GM18951 (cell line): ENCODE measurements at regions of chr22 and their contacts with region 1.

Region 1: DNA sequence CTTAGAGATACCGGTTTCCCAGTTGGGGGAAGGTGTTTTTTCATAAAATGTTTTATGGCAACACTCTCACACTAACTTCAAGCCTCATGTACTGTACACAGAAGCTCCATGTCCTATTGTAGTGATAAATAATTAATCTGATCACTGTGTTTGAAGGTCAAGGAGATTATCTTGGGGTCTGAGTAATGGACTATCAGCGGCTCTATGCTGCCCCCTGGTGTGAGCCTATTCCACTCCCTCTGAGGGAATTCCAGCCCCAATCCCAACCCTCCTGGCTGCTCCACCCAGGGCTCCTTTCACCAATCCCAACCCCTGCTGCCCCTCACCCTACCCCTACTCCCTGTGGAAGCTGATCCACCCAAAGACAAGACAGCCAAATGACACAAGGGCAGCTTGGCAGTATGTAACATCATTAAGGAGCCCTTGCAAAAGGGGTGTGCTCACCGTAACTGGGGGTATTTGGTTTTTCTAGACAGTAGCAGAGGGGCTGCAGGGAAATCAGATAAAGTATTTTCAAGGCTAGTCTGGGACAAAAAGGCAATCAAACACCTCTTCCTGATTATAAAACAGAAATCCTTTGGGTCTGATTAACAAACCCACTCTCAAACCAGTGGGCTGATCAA is 22.3 kb downstream of the HPS4 start:
- POLR2A ChIP-seq: no peak

Region 2: DNA sequence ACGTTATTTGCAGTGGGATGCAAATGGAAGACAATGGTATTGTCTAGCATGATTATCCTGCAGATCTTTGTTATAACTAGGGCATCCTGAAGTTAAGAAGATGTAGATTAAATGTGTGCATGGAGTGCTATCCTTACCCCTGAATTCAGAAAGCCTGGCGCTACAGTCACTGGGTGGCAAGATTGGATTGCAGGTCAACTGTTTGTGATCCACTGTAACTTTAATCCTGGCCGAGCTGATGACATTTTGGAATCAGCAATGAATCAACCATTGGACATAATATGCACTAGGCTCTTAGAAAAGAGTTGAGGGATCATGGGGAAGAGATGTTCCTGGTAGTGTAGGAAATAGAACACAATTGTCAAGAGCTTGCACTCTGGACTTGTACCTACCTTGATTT is 267.0 kb before region 1 on chr22:
- in situ Hi-C with region 1: no loop called
- POLR2A ChIP-seq: no peak

Region 3: DNA sequence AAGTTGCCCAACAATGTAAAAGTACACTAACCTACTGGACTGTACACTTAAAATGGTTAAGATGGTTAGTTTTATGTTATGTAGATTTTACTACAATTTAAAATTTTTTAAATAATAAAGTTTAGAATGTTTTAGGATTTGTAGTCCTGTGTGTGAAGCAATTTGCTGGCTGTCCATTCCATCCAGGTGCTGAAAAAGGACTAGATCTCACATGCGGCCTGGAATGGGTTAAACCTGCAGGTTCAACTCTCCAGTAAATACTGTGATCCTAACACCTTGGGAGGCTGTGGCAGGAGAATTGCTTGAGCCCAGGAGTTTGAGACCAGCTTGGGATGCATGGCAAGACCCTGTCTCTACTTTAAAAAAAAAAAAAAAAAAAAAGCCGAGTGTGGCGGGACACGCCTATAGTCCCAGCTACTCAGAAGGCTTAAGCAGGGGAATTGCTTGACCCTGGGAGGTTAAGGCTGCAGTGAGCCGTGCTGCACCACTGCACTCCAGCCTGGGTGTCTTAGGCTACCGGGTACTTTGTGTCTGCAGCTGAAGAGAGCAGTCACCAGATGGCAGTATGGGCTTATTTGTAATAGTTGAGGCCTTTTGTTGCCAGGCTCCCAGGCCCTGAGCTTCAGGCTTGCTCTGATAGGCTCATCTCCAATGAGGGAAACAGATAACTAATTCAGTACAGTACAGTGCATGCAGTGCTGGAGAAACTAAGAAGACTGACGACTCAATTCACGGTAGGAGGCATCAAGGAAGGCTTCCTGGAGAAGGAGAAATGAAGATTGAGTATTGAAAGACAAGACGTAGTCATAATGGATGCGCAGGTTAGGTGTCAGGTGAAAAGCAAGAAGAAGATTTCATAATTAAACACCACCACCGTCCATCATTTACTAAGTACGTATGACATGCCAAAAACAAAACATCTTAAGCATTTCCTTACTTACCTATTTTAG is 97.0 kb before region 1 on chr22:
- in situ Hi-C with region 1: loop called (anchors 25 kb)
- POLR2A ChIP-seq: no peak

Region 4: DNA sequence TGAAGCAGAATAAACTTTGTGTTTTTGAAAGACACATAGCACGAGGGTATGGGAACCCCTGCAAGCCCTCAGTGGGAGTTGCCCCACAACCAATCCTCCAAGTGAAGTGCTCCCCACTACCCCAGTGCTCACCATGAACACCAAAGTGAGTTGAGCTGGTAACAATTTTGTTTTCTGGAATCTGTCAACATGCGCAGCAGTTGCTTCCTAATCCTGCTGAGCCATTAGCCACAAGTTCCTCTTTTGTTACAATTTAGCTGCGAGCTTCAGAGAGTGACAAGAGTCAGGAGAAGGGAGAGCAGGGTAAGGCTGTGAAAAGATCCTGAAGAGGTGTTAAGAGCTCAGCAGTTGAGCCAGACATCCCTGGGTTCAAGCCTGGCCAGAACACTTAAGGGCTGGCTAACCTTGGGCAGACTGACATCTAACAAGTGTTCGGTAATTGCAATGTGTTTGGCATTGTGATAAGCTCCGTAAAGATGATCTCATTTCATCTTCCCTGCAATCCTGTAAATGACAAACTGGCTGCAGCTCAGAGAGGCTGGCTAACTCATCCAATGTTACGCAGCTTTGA is 56.4 kb before region 1 on chr22:
- in situ Hi-C with region 1: loop called (anchors 5 kb)
- POLR2A ChIP-seq: no peak